AG04449 (cell line): ENCODE measurements at regions of chr21 and their contacts with region 1.

Region 1: GRCh38 chr21:44792702-44793591 is 8.7 kb downstream of the UBE2G2 start:
- DNase-seq: no peak
- H3K4me3 ChIP-seq: no peak overlapping the region
- CTCF ChIP-seq: peak; percentile 62

Region 2: GRCh38 chr21:44510508-44511210 is 282.3 kb before region 1 on chr21:
- CTCF ChIA-PET with region 1: interaction called, 37 read pairs
- POLR2A ChIA-PET with region 1: no interaction called
- DNase-seq: no peak
- H3K4me3 ChIP-seq: no peak overlapping the region
- CTCF ChIP-seq: peak; percentile 78

Region 3: DNA sequence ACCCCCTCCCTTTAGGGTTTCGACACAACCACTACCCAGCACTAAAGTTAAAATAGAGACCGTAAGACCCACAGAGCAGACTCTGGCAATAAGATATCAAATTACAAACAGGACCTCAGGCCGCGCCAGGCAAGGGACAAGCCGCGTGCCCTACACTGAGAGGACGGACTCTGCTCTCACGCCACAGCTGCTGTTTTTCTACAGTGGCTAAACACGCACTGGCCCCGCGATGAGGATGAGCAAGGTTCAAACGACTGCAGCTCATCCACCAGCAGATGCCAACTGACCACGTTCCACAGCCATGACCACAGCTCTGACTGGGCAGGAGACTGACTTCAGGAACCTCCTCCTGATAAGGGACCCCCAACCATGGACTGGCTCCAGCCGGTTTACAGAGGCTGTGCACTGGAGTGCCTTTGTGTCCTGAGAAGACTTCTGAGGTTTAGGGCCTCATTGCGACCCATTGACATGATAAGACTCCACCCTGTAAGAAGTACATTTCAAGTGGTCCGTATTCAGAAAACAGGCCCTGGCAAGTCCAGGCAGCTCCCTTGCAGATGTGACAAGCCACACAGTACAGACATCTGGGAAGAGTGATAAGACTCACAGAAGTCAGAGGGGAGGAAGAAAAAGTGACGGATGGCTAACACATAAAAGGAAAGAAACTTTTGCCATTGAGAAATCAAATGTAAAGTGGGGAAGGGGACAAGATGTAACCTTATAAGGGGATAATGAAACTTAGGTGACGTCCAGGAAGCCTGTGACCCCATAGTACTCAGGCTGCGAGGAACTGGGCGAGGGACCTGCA is 199.1 kb before region 1 on chr21:
- CTCF ChIA-PET with region 1: no interaction called
- POLR2A ChIA-PET with region 1: no interaction called
- DNase-seq: no peak
- H3K4me3 ChIP-seq: no peak overlapping the region
- CTCF ChIP-seq: no peak

Region 4: DNA sequence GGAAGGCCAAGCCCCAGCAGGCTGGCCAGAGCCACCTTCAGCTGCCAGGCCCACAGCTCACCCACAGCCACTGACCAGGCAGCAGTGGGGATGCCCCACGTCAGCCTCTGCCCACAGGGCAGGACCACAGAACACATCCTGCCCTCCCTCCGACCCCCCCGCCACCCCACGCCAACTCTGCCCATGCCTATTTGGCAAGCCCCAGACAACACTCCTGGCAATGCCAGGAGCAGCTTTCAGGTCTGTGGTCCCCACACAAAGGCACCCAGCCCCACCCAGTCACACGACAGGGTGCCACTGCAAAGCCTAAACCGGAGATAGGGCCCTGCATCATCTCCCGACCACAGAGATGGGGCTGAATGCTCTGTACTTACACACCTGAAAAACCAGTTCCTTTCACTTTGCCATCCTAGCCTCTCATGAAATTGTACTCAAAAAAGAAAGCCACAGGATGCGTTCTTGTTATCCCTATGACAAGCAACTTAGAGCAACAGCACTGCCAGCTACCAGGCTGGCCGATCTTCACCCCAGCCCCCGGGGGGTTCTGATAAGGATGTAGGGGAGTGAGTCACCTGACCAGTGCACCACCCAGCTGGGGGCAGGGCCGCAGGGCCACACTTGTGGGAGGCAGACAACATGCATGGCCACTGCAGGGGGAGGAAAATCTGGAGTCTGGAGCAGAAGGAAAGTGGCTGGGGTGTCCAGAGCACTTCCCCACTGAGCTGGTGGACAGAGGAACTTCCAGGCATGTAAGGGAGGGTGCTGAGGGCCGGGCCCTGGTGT is 27.5 kb before region 1 on chr21:
- CTCF ChIA-PET with region 1: interaction called, 27 read pairs
- POLR2A ChIA-PET with region 1: no interaction called
- DNase-seq: no peak
- H3K4me3 ChIP-seq: no peak overlapping the region
- CTCF ChIP-seq: no peak

Region 5: GRCh38 chr21:44779417-44780136 is 13.4 kb before region 1 on chr21:
- CTCF ChIA-PET with region 1: interaction called, 66 read pairs
- POLR2A ChIA-PET with region 1: no interaction called
- DNase-seq: no peak
- H3K4me3 ChIP-seq: no peak overlapping the region
- CTCF ChIP-seq: no peak

Region 6: DNA sequence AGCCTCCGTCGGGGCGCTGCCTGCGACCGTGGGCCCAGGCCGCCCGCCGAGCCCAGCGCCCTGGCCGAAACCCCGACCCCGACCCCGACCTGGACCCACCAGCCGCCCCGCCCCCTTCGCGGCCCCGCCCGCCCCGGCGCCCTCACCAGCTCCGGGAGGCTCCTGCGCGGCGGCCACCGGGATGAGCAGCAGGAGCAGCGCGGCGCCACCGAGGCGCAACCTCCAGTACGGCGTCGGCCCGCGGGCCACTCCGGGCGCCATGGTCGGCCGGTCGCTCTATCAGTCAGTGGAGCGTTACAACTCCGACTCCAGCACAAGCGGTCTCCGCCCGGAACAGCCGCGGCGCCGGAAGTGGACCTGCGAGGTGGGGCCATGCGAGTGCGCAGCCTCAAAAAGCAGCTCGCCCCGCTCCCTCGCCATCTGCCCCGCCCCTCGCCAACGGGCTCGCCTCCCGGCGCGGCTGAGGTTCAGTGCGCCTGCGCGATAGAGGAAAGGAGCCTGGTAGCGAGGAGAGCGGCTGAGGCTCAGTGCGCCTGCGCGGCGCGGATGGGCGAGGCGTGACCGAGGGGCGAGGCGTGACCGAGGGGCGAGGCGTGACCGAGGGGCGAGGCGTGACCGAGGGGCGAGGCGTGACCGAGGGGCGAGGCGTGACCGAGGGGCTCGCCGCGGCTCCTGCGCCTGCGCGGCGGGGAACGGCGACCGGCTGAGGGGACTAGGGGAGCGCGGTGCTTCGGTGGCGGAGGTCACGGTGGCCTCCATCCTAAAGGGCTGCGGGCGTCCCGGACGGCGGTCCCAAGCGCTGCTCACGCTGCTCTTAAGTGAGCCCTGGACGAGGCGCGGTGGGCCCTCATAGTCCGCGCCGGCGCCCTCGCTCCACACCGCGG is 80.7 kb after region 1 on chr21 and contains the start of gene PTTG1IP:
- CTCF ChIA-PET with region 1: interaction called, 12 read pairs
- POLR2A ChIA-PET with region 1: interaction called, 3 read pairs
- DNase-seq: peak; percentile 46
- H3K4me3 ChIP-seq: peak within 1 kb of the TSS; percentile 83
- CTCF ChIP-seq: no peak

Region 7: DNA sequence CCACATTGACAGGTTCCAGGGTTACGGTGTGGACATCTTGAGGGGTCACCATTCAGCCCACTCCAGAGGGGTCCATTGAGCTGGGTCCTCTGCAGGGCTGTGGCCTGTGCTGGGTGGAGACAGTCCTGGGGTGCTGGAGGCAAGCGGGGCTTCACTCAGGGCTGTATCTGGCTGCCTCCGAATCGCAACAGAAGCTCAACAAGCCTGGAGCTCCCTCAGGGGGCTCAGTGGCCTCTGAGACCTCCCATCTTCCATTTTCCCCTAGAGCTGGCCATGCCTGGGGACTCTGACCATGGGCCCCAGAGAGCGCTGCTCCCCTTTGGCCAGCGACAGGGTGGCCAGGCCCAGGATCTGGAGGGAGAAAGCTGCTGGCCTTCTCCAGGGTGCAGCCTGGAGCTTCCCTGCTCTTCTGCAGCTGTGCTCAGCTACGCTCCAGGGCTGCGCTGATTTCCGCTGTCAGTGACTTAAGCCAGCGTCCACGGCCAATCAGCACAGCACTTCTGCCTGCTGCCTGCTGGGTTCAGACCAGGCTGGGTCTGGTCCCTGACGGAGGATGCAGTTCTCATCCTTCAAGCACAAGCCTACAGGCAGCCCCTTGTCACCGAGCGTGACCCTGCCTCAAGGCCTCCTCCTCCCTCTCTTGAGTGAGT is 236.5 kb after region 1 on chr21:
- CTCF ChIA-PET with region 1: no interaction called
- POLR2A ChIA-PET with region 1: no interaction called
- DNase-seq: no peak
- H3K4me3 ChIP-seq: no peak overlapping the region
- CTCF ChIP-seq: no peak